ENCODE measurements at regions of chr21 and their contacts with region 1.

Region 1: DNA sequence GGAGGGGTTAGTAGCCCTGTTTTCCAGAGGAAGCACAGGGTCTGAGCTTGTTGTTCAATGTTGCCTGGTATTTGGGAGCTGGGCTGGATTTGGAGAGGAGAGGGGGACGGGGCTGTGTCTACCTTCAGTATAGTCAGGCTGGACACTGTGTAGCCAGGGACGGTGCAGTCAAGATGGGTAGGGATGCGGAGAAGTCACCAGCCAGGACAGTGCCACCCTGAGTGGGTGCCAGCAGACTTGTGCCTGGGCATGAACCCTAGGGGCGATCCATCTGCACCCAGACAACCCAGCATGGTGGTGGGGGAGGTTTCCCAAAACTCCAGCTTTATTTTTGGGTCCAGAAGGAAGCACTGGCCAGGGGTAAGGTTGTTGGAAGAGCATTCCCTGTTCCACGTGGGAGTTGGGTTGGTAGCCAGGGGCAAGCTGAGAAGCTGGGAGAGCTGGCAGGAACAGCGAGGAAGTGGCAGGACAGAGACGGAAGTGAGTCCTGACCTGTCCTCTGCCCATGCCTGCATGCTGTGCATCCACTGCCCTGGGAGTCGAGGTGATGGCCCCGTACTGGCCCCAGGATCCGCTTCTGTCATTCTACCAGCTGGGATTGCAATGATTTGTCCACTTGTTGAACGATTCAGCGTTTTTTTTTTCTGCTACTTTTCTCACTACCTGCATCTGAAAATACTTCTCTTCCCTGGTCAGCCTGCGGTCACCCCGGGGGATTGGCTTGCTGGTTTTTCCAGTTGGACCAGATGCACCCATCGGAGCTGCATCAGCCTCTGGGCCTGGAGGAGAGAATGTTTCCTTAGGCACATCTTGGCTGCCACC is 28.1 kb upstream of the TMPRSS2 start:
- DNase-seq: no peak
- CTCF ChIP-seq: no peak

Region 2: DNA sequence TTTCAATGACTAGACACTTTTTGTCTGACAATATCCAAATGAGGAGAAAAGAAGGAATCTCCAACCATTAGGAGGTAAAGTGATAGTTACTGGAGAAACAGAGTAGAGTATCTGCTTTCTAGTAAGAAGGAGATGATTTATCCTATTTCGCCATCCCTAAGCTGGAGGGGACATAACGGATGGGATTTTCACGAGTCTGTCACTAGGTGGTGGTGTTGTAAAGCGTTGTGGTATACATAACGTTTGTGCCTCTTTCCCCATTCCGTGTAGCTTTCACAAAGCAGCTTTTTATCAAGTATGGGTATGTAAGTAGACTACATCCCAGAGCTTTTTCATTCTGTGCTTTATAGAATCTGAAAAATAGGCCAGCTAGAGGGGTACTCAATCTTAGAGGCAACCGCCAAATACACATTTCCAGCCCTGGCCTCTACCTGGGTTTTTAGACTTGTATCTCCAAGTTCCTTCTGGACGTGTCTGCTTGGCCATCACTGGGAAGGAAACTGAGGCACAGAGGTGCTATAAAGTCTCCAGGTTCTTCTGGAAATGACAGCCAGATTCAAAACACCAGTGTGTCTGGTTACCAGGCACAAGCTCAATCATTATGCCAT is 252.7 kb before region 1 on chr21:
- in situ Hi-C with region 1: no loop called
- DNase-seq: peak; percentile 79
- CTCF ChIP-seq: peak; percentile 66

Region 3: DNA sequence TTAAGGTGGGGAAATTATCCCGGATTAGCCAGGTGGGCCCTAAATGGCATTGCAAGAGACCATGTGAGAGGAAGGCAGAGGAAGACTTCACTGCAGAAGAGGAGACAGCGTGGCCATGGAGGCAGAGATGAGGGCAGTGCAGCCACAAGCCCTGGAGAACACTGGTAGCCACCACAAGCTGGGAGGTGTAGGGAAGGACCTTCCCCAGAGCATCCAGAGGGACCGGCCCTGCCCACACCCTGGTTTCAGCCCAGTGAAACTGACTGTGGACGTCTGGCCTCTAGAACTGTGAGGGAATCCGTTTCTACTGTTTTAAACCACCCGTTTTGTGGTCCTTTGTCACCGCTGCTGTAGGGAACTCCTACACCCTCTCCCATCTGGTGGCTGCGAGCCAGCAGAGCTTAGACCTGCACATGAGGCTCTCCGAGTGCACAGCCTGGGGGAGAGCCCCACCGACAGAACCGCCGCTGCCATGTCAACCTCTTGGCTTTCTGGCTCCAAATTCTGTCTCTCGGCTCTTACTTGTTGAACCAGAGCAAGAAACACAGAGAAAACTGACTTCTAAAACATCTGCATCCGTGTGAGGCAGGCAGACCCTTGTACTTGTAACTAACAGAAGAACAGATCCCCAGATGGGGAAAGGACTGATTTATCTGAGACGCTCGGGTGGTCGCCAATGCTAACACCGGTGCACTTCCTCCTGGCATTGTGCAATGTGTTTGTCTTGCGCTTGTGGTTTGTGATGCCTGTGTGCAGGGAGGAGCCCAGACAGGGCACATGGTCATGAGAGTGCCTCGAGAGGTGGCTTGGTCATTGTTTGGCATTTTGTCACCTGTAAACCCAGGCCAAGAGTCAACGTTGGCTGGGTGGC is 62.8 kb after region 1 on chr21:
- in situ Hi-C with region 1: loop called (anchors 10 kb)
- DNase-seq: no peak
- CTCF ChIP-seq: no peak

Region 4: DNA sequence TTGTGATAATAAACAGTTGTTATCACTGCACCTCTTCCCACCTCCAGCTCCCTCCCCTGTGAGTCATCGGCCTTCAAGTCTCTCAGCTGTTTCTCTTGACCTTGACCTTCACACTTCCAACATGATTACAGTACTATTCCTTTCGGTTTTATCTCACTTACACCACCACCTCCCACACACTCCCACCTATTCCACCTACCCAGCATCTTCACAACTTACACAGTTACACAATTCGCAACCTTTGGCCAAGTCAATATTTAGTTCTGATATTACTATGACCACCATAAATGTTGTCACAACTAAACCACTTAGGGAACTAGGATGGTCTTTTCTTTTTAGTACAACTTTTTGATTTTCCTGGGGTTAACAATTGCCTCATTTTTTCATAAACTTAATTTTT is 170.6 kb after region 1 on chr21:
- in situ Hi-C with region 1: no loop called
- DNase-seq: no peak
- CTCF ChIP-seq: no peak